CD8-positive, alpha-beta memory T cell (primary cell): ENCODE measurements at regions of chr19 and their contacts with region 1.

Region 1: DNA sequence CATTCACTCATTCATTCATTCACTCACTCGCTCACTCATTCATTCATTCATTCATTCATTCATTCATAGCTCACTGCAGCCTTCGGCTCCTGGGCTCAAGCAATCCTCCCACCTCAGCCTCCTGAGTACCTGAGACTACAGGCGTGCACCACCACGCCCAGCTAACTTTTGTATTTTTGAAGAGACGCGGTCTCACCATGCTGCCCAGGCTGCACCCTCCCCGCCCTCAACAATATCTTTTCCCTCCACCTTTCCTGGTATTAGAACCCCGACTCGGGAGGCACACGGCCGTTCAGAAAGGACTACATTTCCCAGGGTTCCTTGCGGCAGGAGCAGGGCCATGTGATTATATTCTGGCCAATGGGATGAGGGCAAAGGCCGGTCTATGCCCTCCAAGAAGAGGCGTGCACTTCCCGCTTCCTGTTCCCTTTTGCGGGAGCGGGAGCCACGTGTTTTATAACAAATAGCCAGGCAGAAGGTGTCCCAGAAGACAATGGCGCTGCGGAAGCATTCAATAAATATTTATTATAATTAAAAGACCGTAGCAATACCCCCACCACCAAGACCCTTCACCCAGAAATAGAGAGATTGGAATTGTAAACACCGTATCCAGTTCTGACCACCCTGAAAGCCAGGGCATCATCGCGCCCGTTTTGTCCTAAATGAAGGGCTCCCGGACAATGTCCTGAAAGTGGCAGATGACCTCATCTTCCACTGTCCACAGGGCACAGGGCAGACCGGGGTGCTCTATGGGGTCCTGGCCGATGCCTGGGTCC is 15.9 kb downstream of the TICAM1 start:
- DNase-seq: peak; percentile 51 to 80 (median 72)
- H3K4me3 ChIP-seq: peak overlapping the region; percentile 42
- H3K4me3 Mint-ChIP-seq: peak overlapping the region; percentile 1 to 89 (median 76)
- H3K27ac ChIP-seq: no peak overlapping the region
- H3K27ac Mint-ChIP-seq: peak overlapping the region in 7 of 8 donors; percentile 34 to 91 (median 79)
- H3K4me1 ChIP-seq: peaks cover 10% of the 10 kb centered on the region
- H3K4me1 Mint-ChIP-seq: peaks cover 10 to 18% (median 17%) of the 10 kb centered on the region in 3 donors
- H3K27me3 ChIP-seq: no peaks in the 10 kb centered on the region
- H3K27me3 Mint-ChIP-seq: no peaks in the 10 kb centered on the region

Region 2: GRCh38 chr19:4803736-4804695 is 11.6 kb before region 1 on chr19:
- CTCF ChIA-PET with region 1: interaction called, 24 read pairs
- POLR2A ChIA-PET with region 1: no interaction called
- DNase-seq: peak; percentile 40 to 72 (median 53)
- H3K4me3 ChIP-seq: no peak overlapping the region
- H3K4me3 Mint-ChIP-seq: no peak overlapping the region
- H3K27ac ChIP-seq: no peak overlapping the region
- H3K27ac Mint-ChIP-seq: peak overlapping the region in 1 of 8 donors; percentile 21
- H3K4me1 ChIP-seq: no peaks in the 10 kb centered on the region
- H3K4me1 Mint-ChIP-seq: peaks cover 0 to 3% (median 0%) of the 10 kb centered on the region in 3 donors
- H3K27me3 ChIP-seq: no peaks in the 10 kb centered on the region
- H3K27me3 Mint-ChIP-seq: no peaks in the 10 kb centered on the region

Region 3: DNA sequence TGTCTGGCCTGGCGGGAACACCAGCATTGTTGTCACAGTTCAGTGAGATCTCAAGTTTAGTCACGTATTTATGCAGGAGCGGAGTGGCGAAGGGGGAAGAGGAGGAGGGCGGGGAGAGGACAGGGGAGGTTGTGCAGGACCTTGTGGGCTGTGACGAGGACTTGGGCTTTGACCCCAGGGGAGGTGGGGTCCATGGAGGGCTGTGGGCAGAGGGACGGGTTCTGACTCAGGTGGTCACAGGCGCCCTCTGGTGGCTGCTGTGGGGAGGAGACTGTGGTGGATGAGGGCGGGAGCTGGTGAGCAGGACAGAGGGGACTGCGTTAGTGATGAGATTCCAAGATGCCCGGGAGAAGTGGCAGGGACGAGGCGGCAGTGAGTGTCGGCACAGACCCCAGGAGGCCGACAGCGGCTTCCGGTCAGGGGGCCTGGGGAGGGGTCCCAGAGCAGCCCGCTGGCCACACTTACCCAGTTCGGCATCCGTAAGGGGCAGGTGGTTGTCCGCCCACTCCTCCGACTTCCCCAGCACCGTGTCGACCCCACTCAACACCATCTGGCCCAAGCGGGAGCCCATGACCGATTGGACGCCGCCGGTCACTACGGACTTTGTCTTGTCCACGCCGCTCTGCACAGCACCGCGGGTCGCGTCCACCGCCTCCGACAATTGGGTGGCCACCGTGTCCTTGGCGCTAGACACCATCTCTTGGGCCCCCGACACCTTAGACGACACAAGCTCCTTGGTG is 36.1 kb after region 1 on chr19:
- CTCF ChIA-PET with region 1: interaction called, 205 read pairs
- POLR2A ChIA-PET with region 1: no interaction called
- DNase-seq: peak; percentile 60 to 82 (median 68)
- H3K4me3 ChIP-seq: no peak overlapping the region
- H3K4me3 Mint-ChIP-seq: no peak overlapping the region
- H3K27ac ChIP-seq: no peak overlapping the region
- H3K27ac Mint-ChIP-seq: peak overlapping the region in 1 of 8 donors; percentile 19
- H3K4me1 ChIP-seq: no peaks in the 10 kb centered on the region
- H3K4me1 Mint-ChIP-seq: peaks cover 2 to 4% (median 3%) of the 10 kb centered on the region in 3 donors
- H3K27me3 ChIP-seq: no peaks in the 10 kb centered on the region
- H3K27me3 Mint-ChIP-seq: no peaks in the 10 kb centered on the region

Region 4: GRCh38 chr19:4909897-4910593 is 94.4 kb after region 1 on chr19:
- CTCF ChIA-PET with region 1: interaction called, 55 read pairs
- POLR2A ChIA-PET with region 1: no interaction called
- DNase-seq: peak; percentile 90 to 95 (median 92)
- H3K4me3 ChIP-seq: peak overlapping the region; percentile 73
- H3K4me3 Mint-ChIP-seq: peak overlapping the region; percentile 88 to 100 (median 99)
- H3K27ac ChIP-seq: no peak overlapping the region
- H3K27ac Mint-ChIP-seq: peak overlapping the region in 7 of 8 donors; percentile 32 to 96 (median 84)
- H3K4me1 ChIP-seq: peaks cover 61% of the 10 kb centered on the region
- H3K4me1 Mint-ChIP-seq: peaks cover 52 to 77% (median 55%) of the 10 kb centered on the region in 3 donors
- H3K27me3 ChIP-seq: no peaks in the 10 kb centered on the region
- H3K27me3 Mint-ChIP-seq: peaks cover 0 to 4% of the 10 kb centered on the region in 2 donors